ENCODE measurements at regions of chr10 and their contacts with region 1.

Region 1: DNA sequence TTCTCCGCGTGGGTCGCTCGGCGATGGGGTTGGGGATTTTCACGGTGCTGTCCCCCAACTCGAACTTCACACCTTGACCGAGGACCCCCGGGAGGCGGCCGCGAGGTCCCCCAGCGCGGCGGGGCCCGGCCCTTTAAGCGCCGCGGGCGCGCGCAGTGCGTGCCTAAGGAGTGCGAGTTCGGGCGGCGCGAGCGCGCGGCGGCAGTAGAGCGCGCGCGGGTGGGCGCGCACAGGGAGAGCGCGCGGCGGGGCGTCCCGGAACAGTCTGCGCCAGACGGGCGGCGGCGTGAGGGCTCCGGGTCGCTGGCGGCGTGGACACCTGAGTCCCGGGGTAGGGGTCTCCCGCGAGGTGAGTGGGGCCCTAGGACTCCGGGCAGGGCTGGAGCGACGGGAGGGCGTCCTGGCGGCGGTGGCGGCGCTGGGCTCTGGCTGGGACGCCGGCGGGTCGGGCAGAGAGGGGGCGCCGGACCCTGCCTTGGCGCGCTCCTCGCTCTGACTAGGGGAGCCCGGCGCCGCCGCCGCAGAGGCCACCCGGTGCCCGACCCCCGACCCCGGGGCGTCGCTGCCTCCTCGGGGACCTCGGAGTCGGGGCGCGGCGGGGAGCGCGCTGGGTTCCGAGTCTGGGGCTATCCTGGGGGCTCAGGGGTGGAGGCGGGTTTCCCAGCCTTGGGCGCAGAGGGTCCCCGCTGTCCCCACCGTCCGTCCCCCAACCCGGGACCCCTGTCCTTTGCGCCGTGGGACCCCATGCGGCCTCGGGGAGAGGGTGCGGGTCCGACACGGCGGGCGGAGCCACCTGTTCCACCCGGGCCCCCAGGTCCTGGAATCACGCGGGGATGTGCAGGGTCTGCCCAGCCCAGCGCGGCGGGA is at the start of gene PROSER2:
- DNase-seq: peak; percentile 70
- H3K4me3 ChIP-seq: peak within 1 kb of the TSS; percentile 82 to 99 (median 89)
- H3K27ac ChIP-seq: peak within 1 kb of the TSS; percentile 43
- H3K4me1 ChIP-seq: peaks cover 4% of the 10 kb centered on the region
- H3K27me3 ChIP-seq: no peaks in the 10 kb centered on the region
- CTCF ChIP-seq: no peak
- POLR2A ChIP-seq: peak; percentile 81
- total RNA-seq, gene PROSER2: 22.6 and 23.5 TPM in 2 replicates

Region 2: GRCh38 chr10:11165591-11166543 is 657.5 kb before region 1 on chr10:
- CTCF ChIA-PET with region 1: no interaction called
- POLR2A ChIA-PET with region 1: no interaction called
- dilution Hi-C with region 1: no loop called
- intact Hi-C with region 1: no loop called
- DNase-seq: peak; percentile 33
- H3K4me3 ChIP-seq: peak overlapping the region; percentile 46 to 77 (median 67)
- H3K27ac ChIP-seq: no peak overlapping the region
- H3K4me1 ChIP-seq: peaks cover 9% of the 10 kb centered on the region
- H3K27me3 ChIP-seq: no peaks in the 10 kb centered on the region
- CTCF ChIP-seq: peak; percentile 29 to 42
- POLR2A ChIP-seq: no peak

Region 3: DNA sequence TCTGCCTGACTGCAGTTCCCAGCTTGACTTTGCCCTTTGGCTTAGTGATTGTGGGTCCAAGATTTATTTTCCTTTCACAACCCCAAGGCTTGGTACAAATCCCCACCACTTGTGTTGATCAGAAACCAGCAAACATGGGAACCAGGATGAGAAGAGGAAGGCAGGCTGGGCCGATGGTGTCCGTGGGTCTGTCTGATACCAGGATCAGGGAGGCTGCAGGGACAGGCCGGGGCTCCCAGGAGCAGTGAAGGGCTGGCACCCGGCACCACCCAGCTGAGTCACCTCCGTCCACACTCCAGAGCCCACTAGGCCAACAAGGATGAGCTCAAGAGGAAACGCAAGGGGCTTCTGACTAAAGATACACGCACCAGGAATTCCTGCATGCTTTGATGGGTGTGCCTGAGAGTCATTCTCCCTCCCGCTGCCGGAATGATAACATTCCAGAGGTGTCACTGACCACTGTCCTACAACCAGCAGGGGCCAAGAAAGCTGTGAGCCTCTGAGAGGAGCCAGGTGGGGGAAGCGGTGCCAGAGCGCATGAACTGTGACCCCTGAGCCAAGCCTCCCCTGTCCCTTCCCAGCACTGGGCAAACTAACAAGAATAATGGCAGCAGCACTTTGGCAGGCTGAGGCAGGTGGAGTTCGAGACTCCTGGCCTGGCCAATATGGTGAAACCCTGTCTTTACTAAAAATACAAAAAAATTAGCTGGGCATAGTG is 29.4 kb before region 1 on chr10:
- CTCF ChIA-PET with region 1: interaction called, 80 read pairs
- POLR2A ChIA-PET with region 1: interaction called, 3 read pairs
- dilution Hi-C with region 1: no loop called
- intact Hi-C with region 1: loop called (anchors 1 kb)
- DNase-seq: no peak
- H3K4me3 ChIP-seq: no peak overlapping the region
- H3K27ac ChIP-seq: no peak overlapping the region
- H3K4me1 ChIP-seq: peaks cover 15% of the 10 kb centered on the region
- H3K27me3 ChIP-seq: peaks cover 0 to 4% of the 10 kb centered on the region in 2 experiments
- CTCF ChIP-seq: no peak
- POLR2A ChIP-seq: no peak

Region 4: DNA sequence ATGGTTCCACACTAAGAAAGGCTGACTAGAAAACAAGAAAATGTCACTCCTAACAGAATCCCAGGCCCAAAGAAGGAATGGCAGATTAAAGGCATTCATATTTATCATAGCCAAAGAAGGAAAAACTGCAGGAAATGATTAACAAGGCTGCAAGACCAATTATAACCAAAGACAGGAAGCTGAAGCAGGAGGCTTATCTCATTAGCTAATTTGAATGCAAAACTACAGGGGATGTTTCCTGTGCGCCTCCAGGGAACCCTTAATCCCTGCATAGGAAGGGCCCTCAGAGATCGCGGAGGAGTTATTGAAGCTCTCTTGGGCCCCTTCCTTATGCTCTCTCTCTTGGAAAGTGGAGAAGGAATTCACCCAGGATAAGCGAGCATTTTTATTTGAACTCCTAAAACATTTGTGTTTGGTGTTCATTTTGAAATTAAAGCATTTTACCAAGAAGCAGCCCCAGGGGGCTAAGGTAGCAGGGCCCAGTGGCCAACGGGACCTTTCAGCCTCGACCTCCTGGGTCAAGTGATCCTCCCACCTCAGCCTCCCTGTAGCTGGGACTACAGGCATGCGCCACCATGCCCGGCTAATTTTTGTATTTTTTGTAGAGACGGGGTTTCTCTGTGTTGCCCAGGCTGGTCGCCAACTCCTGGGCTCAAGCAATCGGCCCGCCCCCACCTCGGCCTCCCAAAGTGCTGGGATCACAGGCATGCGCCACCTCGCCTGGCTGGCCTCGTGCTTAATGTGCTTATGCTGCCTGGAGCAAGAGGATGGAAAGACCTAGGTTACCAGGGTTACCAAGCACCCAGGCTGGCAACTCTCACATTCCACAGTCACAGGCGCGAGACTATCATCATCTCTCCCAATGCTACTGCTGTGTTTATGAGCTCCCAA is 24.3 kb before region 1 on chr10:
- CTCF ChIA-PET with region 1: interaction called, 80 read pairs
- POLR2A ChIA-PET with region 1: interaction called, 3 read pairs
- dilution Hi-C with region 1: no loop called
- intact Hi-C with region 1: no loop called
- DNase-seq: peak; percentile 90
- H3K4me3 ChIP-seq: no peak overlapping the region
- H3K27ac ChIP-seq: peak overlapping the region; percentile 66
- H3K4me1 ChIP-seq: peaks cover 17% of the 10 kb centered on the region
- H3K27me3 ChIP-seq: no peaks in the 10 kb centered on the region
- CTCF ChIP-seq: no peak
- POLR2A ChIP-seq: peak; percentile 61

Region 5: GRCh38 chr10:11810313-11810766 is 13.0 kb before region 1 on chr10:
- CTCF ChIA-PET with region 1: interaction called, 19 read pairs
- POLR2A ChIA-PET with region 1: interaction called, 4 read pairs
- dilution Hi-C with region 1: no loop called
- intact Hi-C with region 1: no loop called
- DNase-seq: peak; percentile 15
- H3K4me3 ChIP-seq: no peak overlapping the region
- H3K27ac ChIP-seq: no peak overlapping the region
- H3K4me1 ChIP-seq: peaks cover 20% of the 10 kb centered on the region
- H3K27me3 ChIP-seq: no peaks in the 10 kb centered on the region
- CTCF ChIP-seq: no peak
- POLR2A ChIP-seq: no peak

Region 6: DNA sequence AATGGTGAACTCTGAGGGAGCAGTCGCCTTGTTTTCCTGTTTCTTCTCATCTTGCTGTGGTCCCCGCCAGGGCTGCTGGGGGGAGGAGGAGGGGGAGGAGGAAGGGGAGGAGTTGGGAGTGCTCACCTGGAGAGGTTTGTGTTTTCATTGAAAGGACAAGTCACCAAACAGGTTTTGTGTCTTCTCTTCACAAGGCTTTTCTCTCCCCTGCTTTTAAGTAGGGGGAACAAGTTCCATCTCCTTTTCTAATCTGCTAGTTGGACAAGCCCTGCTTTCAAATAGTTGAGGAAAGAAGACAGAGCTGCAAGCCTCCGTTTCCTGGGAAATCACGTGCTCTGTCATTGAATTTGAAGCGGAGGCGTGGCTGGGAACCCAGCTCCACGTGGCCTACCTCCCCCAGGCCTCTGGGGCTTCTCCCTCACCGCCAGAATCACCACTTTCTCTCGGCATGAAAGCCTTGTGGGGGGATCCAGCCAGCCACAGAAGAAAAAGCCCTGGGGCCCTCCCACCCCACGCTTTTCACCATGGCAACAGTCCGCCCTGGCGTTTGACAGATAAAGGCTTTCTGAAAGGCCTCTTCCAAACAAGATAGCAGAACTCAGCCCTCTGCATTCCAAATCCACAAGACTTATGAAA is 51.3 kb after region 1 on chr10:
- CTCF ChIA-PET with region 1: interaction called, 5 read pairs
- POLR2A ChIA-PET with region 1: no interaction called
- dilution Hi-C with region 1: no loop called
- intact Hi-C with region 1: loop called (anchors 2 kb)
- DNase-seq: peak; percentile 14
- H3K4me3 ChIP-seq: no peak overlapping the region
- H3K27ac ChIP-seq: no peak overlapping the region
- H3K4me1 ChIP-seq: peaks cover 29% of the 10 kb centered on the region
- H3K27me3 ChIP-seq: no peaks in the 10 kb centered on the region
- CTCF ChIP-seq: no peak
- POLR2A ChIP-seq: no peak

Region 7: DNA sequence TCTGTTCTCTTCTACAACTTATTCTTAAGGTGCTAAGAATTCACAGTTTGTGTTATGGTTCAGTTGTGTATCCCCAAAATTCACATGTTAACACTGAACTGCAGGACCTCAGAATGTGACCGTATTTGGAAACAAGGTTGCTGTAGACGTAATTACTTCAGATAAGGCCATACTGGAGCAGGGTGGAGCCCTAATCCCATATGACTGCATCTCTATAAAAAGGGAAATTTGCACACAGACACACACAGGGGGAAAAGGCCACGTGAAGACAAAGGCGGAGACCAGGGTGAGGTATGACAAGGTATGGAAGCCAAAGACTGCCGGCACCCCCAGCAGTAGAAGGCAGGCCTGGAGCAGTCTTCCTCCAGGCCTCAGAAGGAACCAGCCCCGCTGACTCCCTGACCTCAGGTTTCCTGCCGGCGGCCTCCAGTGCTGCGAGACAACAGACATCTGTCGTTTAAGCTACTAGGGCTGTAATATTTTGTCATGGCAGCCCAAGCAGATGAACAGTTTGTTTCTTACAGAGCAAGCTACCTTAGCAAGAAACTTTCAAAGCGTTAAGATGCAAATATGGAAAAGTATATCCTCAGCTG is 98.5 kb after region 1 on chr10:
- CTCF ChIA-PET with region 1: interaction called, 4 read pairs
- POLR2A ChIA-PET with region 1: no interaction called
- dilution Hi-C with region 1: no loop called
- intact Hi-C with region 1: loop called (anchors 5 kb)
- DNase-seq: peak; percentile 50
- H3K4me3 ChIP-seq: no peak overlapping the region
- H3K27ac ChIP-seq: no peak overlapping the region
- H3K4me1 ChIP-seq: peaks cover 7% of the 10 kb centered on the region
- H3K27me3 ChIP-seq: no peaks in the 10 kb centered on the region
- CTCF ChIP-seq: no peak
- POLR2A ChIP-seq: no peak

Region 8: DNA sequence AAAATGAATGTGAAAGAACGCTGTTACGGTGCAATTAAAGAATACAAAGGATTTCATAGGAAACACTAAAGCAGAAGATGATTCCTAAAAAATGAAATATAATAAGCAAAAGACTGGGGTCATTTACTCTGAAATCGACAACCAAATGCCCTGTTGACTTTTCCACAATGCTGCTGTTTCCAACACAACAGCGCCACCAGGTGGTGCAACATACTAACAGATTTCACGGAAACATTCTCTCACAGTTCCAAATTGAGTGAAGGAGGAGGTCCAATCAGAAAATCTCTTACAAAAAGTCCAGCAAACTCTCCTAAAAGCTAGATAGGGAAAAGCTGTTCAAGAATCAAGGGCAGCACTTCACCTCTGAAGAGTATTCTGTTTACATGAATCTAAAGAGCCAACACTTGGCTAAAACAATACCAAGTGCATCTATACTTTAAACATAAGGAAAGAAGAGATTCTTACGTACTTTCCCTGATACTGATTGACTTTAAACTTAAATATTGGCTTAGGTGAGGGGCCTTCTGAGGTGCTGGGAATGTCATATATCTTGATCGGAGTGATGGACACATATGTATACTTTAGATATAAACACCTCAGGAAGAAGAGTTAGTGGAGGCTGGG is 163.3 kb after region 1 on chr10:
- CTCF ChIA-PET with region 1: interaction called, 23 read pairs
- POLR2A ChIA-PET with region 1: no interaction called
- dilution Hi-C with region 1: no loop called
- intact Hi-C with region 1: loop called (anchors 1 kb)
- DNase-seq: peak; percentile 86
- H3K4me3 ChIP-seq: no peak overlapping the region
- H3K27ac ChIP-seq: no peak overlapping the region
- H3K4me1 ChIP-seq: no peaks in the 10 kb centered on the region
- H3K27me3 ChIP-seq: no peaks in the 10 kb centered on the region
- CTCF ChIP-seq: peak; percentile 70 to 73
- POLR2A ChIP-seq: no peak

Region 9: DNA sequence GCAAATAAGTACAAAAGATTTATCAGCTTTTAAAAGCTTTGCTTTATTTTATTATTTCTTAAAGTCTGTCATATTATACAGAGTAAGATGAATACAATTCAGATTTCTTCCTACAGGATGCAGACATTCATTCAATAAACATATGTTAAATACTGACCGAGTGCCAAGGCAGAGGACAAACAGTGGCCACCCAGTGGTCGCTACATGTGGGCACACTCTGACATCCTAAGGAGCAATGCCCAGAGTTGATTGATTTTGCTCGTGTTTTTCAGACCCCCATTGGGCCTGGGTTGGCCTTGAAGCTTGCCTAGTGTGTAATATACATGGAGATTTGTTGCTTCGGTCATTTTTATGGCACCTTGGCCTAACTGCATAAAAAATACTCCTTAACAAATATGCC is 976.9 kb after region 1 on chr10:
- CTCF ChIA-PET with region 1: no interaction called
- POLR2A ChIA-PET with region 1: no interaction called
- dilution Hi-C with region 1: no loop called
- intact Hi-C with region 1: no loop called
- DNase-seq: peak; percentile 8
- H3K4me3 ChIP-seq: no peak overlapping the region
- H3K27ac ChIP-seq: no peak overlapping the region
- H3K4me1 ChIP-seq: peaks cover 6% of the 10 kb centered on the region
- H3K27me3 ChIP-seq: peaks cover 0 to 1% of the 10 kb centered on the region in 2 experiments
- CTCF ChIP-seq: peak in 1 of 2 donors; percentile 11
- POLR2A ChIP-seq: no peak

Measured in endothelial cell of umbilical vein (primary cell).